ENCODE measurements at regions of chr2 and their contacts with region 1.

Region 1: DNA sequence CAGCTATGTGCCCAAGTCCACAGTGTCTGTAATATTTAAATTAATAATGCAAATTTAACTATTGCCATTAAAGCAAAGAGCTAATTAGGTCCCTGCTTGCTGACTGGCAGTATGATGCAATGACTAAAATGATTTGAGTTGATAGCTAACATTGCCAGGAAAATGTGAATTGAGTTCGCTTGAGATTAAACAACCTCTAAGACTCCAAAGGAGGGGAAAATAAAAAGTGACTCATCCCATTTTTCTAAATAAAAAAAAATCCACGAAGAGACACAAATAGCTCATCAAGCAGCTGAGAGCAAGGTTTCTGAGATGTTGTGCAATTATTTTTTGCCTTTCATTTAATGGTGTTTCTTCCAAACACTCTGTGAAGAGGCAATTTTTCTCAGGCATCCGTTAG is 413.0 kb downstream of the MTX2 start:
- DNase-seq: no peak
- H3K4me3 ChIP-seq: no peak overlapping the region
- H3K27ac ChIP-seq: no peak overlapping the region
- H3K4me1 ChIP-seq: no peaks in the 10 kb centered on the region
- H3K27me3 ChIP-seq: peaks cover 16 to 21% of the 10 kb centered on the region in 2 experiments
- CTCF ChIP-seq: no peak
- POLR2A ChIP-seq: no peak

Region 2: DNA sequence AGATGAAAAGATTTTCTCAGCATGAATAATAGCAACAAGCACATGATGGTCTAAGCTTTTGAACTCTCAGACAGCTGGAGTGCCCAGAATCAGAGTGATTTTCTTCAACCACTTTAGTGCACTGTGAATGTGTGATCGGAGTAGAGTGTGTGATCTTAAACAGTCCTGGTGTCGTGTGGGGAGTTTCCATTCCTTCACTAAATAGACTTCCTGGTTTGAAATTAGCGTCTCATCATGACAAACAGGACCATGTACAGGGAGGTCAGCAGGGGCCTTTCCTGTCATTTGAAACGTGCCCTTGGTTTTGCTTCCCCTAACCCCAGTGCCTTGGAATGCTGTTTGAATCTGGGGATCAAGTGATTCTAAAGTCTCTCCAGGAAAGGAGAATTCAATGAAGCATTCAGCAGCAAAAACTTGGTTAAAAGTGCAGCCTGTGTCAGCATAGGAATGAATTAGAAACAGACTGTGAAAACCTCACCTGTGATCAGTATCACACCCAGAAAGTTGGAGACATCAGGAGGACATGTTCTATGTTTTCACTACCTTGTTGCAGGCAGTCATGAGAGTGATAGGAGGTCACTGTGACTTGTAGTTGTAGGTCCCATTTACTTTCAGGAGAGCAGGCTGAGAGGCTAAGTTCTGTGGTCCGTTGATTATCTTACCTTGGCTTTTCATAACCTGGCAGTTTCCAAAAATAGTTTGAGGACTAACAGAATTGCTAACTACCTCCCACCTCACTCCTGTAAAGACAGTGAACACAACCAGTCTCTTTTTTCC is 12.7 kb before region 1 on chr2:
- CTCF ChIA-PET with region 1: interaction called, 12 read pairs
- POLR2A ChIA-PET with region 1: no interaction called
- dilution Hi-C with region 1: no loop called
- intact Hi-C with region 1: no loop called
- DNase-seq: peak; percentile 13
- H3K4me3 ChIP-seq: no peak overlapping the region
- H3K27ac ChIP-seq: no peak overlapping the region
- H3K4me1 ChIP-seq: no peaks in the 10 kb centered on the region
- H3K27me3 ChIP-seq: no peaks in the 10 kb centered on the region
- CTCF ChIP-seq: no peak
- POLR2A ChIP-seq: no peak